ENCODE measurements at regions of chr17 and their contacts with region 1.

Region 1: DNA sequence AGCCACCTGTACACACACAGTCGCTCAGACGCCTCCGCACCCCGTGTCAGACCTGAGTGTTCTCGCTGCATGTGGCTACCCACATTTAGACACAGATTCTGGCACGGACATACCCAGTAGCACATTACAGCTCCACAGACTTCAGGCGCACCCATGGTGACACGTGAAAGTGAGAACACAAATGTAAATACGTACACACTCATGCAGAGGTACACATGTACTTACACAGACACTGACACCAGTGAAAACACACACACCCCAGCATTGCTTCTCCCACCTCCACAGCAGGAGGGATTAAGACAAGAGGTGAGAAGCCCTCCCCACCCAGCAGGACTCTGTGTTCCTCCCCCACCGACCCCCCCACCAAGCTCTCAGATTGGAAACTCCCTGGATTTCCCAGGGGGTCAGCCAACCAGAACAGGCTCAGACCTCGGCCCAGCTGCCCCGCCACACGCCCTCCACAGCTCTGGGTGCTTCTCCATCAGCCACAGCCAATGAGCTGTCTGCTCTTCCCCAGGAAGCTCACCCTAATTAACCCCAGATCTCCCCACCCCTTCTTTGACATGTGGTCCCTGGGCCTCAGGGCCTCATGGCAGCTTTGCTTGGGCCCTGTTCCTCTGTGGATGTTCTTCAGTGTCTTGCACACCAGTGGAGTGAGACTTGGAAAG is 5.3 kb upstream of the FOXN1 start:
- DNase-seq: peak; percentile 63
- ATAC-seq: peak; percentile 93
- H3K4me3 ChIP-seq: peak overlapping the region; percentile 59
- H3K27ac ChIP-seq: peak overlapping the region; percentile 87
- H3K4me1 ChIP-seq: peaks cover 26% of the 10 kb centered on the region
- H3K27me3 ChIP-seq: no peaks in the 10 kb centered on the region
- CTCF ChIP-seq: no peak
- EP300 ChIP-seq: no peak
- POLR2A ChIP-seq: peak; percentile 47; the same call in 1 of the 2 replicates
- RAD21 ChIP-seq: no peak

Region 2: DNA sequence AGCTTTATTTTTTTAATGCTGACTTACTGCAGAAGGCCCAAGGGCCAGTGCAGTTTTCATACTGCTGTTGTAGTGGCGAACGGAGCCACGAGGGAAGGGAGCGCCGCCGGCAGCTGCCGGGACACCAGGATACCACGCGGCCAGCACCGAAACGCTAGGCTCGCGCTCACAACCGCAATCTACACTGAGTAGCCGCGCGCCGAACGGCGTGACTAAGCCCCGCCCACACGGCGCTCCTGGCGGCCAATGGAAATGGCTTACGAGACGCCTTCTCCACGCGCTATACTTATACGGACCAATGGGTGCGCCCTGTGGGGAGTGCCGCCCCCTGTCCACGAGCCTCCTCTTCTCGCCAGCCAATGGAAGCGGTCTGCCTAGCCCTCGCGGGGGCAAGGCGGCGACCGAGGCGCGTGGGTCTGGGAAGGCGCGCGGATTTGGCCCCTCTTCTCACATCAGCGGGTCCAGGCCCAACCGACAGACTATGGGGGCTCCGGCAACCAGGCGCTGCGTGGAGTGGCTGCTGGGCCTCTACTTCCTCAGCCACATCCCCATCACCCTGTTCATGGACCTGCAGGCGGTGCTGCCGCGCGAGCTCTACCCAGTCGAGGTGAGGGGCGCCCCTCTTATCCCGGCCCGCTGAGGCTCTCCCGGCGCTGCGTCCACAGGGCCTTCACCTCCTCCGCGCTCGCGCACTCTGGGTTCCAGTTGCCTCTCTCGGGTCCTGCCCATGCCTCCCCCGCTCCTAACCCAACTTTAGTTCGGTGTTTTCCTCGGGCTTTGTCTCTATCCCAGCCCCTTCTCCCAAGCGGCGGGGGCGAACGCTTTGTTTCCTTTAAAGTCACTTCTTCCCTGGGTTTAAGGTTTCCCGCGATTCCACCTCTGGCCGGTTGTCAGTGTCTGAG is 181.8 kb before region 1 on chr17 and contains the start of gene TMEM97:
- CTCF ChIA-PET with region 1: no interaction called
- POLR2A ChIA-PET with region 1: no interaction called
- RAD21 ChIA-PET with region 1: no interaction called
- SMC1A ChIA-PET with region 1: no interaction called
- in situ Hi-C with region 1: no loop called
- intact Hi-C with region 1: no loop called
- DNase-seq: peak; percentile 87
- ATAC-seq: peak; percentile 98
- H3K4me3 ChIP-seq: peak within 1 kb of the TSS; percentile 94
- H3K27ac ChIP-seq: peak within 1 kb of the TSS; percentile 73
- H3K4me1 ChIP-seq: no peaks in the 10 kb centered on the region; the same call in 1 of the 2 replicates
- H3K27me3 ChIP-seq: no peaks in the 10 kb centered on the region
- CTCF ChIP-seq: 0 out of 6 replicates have a peak, but pooled peaks of 2 of the 3 experiments have one; percentile 3 to 9
- EP300 ChIP-seq: no peak
- POLR2A ChIP-seq: peak; percentile 83
- RAD21 ChIP-seq: no peak
- polyA plus RNA-seq, gene TMEM97: 58.0 to 130 TPM

Region 3: DNA sequence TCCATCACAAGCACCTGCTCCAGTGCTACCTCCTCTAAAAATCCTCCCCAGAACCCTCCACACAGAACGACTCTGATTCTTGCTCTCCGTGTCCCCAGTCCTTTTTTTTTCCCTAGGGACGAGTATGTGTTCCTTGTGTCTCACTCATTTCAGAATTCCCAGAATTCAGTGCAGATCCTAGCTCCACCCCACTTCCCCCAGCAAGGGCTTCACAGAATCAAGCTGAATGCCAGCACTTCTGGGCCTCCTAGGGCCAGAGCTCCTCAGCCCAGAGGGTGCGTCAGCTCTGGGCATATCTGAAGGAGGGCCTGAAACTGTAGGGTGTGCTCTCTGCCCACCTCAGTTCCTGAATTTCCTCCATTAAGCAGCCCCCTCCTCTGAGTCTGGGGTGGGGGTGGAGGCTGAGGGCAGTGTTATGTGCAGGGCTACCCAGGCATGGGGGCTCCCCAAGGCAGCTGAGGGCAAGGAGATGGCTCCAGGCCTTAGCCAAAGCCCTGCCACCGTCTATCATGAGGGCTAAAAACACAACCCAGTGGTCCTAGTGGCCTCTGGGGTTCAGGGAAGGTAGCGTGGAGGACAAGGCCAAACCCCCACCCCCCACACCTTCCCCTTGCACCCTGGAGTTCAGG is 45.1 kb after region 1 on chr17:
- CTCF ChIA-PET with region 1: interaction called, 316 read pairs
- POLR2A ChIA-PET with region 1: interaction called, 48 read pairs
- RAD21 ChIA-PET with region 1: interaction called, 37 read pairs
- SMC1A ChIA-PET with region 1: interaction called, 53 read pairs
- in situ Hi-C with region 1: loop called (anchors 5 kb)
- intact Hi-C with region 1: loop called (anchors 2 kb)
- DNase-seq: no peak
- ATAC-seq: no peak
- H3K4me3 ChIP-seq: no peak overlapping the region
- H3K27ac ChIP-seq: no peak overlapping the region
- H3K4me1 ChIP-seq: peaks cover 38% of the 10 kb centered on the region
- H3K27me3 ChIP-seq: no peaks in the 10 kb centered on the region
- CTCF ChIP-seq: no peak
- EP300 ChIP-seq: no peak
- POLR2A ChIP-seq: no peak
- RAD21 ChIP-seq: no peak

Measured in GM12878 (cell line).